ENCODE measurements at regions of chr15 and their contacts with region 1.

Region 1: DNA sequence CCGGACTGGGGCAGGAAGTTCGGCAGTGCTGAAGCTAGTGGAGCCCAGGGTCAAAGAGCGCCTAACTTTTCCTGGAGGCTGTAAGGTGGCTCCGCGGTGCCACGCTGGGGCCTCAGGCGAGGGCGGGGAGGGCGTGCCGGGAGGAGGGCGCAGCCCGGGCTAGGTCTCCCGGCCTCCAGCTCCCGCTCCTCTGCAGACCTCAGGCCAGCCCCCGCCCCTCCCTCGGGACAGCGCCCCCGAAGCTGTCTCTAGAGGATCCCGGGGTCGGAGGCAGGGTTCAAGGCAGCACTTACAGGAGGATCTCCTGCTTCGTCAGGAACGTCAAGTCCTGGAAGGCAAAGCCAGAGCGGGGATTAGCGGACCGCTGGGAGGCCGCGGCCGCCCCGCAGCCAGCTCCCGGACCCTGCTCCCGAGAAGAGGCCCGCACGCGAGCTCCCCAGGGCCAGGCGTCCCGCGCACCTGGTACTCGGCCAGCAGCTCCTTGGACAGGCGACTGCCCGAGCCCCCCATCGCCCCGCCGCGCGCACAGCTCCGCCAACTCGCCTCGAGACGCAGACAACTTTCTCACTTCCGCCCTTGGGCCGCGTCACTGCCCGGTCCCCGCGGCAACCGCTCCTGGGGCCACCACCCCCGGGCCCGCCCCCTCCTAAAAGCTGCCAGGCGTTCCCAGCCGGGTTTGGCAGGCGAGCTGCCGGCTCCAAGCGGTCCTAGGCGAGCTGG is at the start of gene CIB1:
- DNase-seq: peak; percentile 98 to 99 (median 98)
- ATAC-seq: peak; percentile 91 to 96 (median 94)
- H3K4me3 ChIP-seq: peak within 1 kb of the TSS; percentile 70 to 98 (median 84)
- H3K27ac ChIP-seq: peak within 1 kb of the TSS; percentile 67 to 98 (median 92)
- H3K4me1 ChIP-seq: peaks cover 3 to 53% (median 30%) of the 10 kb centered on the region in 12 donors
- H3K27me3 ChIP-seq: no peaks in the 10 kb centered on the region
- CTCF ChIP-seq: peak in 9 of 12 donors; percentile 13 to 57 (median 47)
- POLR2A ChIP-seq: peak in 1 of 2 donors; percentile 21
- total RNA-seq, gene CIB1: 38.7 to 107 (median 80.8) TPM

Region 2: GRCh38 chr15:89893696-89894455 is 339.7 kb before region 1 on chr15 and contains the start of gene AP3S2:
- intact Hi-C with region 1: loop called in 1 of 10 experiments (anchors 2 kb)
- DNase-seq: peak; percentile 90 to 94 (median 93)
- ATAC-seq: peak; percentile 98 to 99 (median 99)
- H3K4me3 ChIP-seq: peak within 1 kb of the TSS; percentile 55 to 100 (median 91)
- H3K27ac ChIP-seq: peak within 1 kb of the TSS; percentile 42 to 98 (median 92)
- H3K4me1 ChIP-seq: peaks cover 0 to 30% (median 13%) of the 10 kb centered on the region in 12 donors
- H3K27me3 ChIP-seq: no peaks in the 10 kb centered on the region
- CTCF ChIP-seq: peak in 1 of 12 donors; percentile 7
- POLR2A ChIP-seq: peak in 1 of 2 donors; percentile 61
- total RNA-seq, gene AP3S2: 37.1 to 64.6 (median 43.3) TPM

Region 3: GRCh38 chr15:90249203-90249863 is 15.8 kb after region 1 on chr15 and contains the start of gene TTLL13:
- intact Hi-C with region 1: loop called in 1 of 10 experiments (anchors 1 kb)
- DNase-seq: peak; percentile 90 to 99 (median 97)
- ATAC-seq: peak; percentile 91 to 98 (median 96)
- H3K4me3 ChIP-seq: peak within 1 kb of the TSS; percentile 28 to 94 (median 59)
- H3K27ac ChIP-seq: peak within 1 kb of the TSS in 11 of 12 donors; percentile 22 to 81 (median 60)
- H3K4me1 ChIP-seq: peaks cover 0 to 22% (median 11%) of the 10 kb centered on the region in 12 donors
- H3K27me3 ChIP-seq: no peaks in the 10 kb centered on the region
- CTCF ChIP-seq: peak in 1 of 12 donors; percentile 4
- POLR2A ChIP-seq: peak in 1 of 2 donors; percentile 59
- total RNA-seq, gene TTLL13: 0.13 to 0.35 (median 0.23) TPM in 4 of 9 donors, not detected in the others

Region 4: DNA sequence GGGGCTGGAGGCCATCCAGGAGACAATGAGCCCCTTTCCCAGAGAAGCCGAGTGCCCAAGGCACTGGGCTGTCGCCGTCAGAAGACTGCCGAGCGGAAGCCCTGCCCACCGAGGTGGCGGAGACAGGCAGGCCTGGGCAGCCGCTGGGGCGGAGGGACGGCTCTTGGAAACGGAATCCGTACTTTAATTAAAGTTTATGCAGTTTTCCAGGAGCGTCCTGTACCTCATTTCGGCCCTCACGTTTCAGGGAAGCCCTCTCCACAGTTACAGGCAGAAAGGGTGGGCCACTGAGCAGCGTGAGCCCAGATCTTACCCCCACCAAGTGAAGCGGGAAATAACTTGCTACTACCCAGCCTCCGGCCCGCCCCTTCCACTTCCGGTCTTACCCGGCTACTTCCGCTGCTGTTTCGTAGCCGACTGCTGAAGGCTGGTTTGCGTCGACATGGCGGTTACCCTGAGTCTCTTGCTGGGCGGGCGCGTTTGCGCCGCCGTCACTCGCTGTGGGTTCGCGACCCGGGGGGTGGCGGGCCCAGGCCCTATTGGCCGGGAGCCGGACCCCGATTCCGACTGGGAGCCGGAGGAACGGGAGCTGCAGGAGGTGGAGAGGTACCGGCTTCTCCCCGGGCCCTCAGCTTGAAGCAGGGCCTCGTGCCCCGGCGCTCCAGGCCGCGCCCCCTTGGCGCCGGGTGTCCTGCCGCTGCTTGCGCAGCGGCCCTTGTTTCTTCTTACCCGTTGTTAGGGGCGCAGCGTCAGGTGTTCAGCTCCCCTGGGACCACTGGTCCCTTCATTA is 31.9 kb after region 1 on chr15 and contains the start of gene NGRN:
- intact Hi-C with region 1: loop called in 4 of 10 experiments (anchors 1 to 5 kb)
- DNase-seq: peak; percentile 94
- ATAC-seq: peak; percentile 88 to 97 (median 96)
- H3K4me3 ChIP-seq: peak within 1 kb of the TSS; percentile 36 to 95 (median 72)
- H3K27ac ChIP-seq: peak within 1 kb of the TSS; percentile 90 to 100 (median 96)
- H3K4me1 ChIP-seq: peaks cover 0 to 50% (median 45%) of the 10 kb centered on the region in 12 donors
- H3K27me3 ChIP-seq: no peaks in the 10 kb centered on the region
- CTCF ChIP-seq: no peak
- POLR2A ChIP-seq: peak in 1 of 2 donors; percentile 77
- total RNA-seq, gene NGRN: 93.2 to 149 (median 116) TPM